ENCODE measurements at regions of chr10 and their contacts with region 1.

Region 1: GRCh38 chr10:92573798-92574547 is at the start of gene IDE:
- DNase-seq: peak; percentile 75 to 90 (median 76)
- H3K4me3 ChIP-seq: peak within 1 kb of the TSS; percentile 69 to 98 (median 93)
- H3K27ac ChIP-seq: peak within 1 kb of the TSS in 58 of 59 donors; percentile 65 to 98 (median 91)
- H3K27me3 ChIP-seq: no peaks in the 10 kb centered on the region
- CTCF ChIP-seq: peak in 46 of 56 donors; percentile 50 to 88 (median 77)
- total RNA-seq, gene IDE: 21.5 to 50.9 (median 31.2) TPM

Region 2: DNA sequence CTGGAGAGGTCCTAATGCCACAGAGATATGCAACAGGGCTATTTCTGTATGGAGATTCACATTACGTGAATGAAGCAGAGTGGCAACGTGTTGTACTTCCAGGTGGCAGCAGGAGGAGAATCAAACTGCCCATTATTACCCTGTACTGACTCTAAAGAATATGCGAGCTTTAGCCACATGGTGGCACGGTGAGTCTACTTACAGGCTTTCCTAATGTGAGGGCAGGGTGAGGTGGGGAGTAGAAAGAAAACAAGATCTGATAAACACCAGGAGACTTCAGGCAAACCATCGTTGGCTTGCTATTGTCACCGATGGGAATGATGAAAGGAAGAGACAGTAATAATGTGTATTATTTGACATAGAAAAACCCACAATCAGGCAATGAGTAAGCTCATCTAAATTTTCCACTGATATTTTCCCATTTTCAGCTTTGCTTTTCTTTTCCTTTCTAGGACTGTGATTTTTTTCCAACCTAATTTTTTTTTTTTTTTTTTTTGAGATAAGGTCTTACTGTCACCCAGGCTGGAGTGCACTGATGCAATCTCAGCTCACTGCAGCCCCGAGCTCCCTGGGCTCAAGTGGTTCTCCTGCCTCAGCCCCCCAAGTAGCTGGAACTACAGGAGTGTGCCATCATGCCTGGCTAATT is 486.1 kb before region 1 on chr10:
- intact Hi-C with region 1: loop called in 1 of 2 experiments (anchors 10 kb)
- DNase-seq: peak in 8 of 10 donors; percentile 47 to 84 (median 56)
- H3K4me3 ChIP-seq: no peak overlapping the region
- H3K27ac ChIP-seq: peak overlapping the region in 21 of 59 donors; percentile 0 to 48 (median 24)
- H3K27me3 ChIP-seq: no peaks in the 10 kb centered on the region
- CTCF ChIP-seq: peak; percentile 9 to 91 (median 76)

Region 3: DNA sequence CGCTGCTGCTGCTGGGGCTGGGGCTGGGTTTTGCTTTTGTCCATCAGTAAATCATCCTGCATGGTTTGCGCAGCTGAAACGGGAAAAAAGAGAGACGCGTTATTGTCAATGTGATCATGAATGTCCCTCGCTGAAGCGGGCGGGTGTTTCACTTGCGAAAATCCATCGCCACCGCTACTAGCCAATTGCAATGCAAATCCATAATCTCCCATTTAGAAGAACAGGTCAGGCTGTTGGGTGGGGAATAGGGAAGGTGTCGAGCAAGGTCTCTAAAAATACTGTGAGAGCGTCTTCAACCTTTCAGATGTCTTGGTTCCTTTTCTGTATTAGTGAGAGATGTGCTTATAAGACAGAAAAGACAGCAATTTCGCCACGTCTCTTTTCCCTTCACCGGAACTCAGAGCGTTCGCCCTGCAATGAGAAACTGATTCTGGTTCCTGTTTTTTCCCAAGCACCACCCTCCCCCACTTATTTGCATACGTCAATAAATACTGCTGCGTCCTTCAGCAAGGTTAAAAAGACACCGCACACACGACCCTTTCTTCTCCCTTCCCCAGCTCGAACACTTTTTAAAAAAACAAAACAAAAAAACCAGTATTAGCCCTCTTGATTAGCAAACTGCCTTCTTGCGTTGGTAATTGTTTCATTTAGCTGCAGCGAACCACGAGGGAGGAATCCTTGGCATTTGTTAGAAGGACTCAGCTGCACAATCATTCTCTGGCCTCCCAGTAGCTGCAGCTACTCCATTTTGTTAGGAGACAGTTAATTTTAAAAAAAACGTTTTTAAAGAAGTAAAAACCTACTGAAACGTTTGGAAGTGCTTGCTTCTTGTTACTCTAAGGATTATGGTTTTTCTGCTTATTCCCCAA is 333.4 kb before region 1 on chr10:
- intact Hi-C with region 1: loop called in 1 of 2 experiments (anchors 5 kb)
- DNase-seq: peak in 9 of 10 donors; percentile 53 to 80 (median 60)
- H3K4me3 ChIP-seq: peak overlapping the region; percentile 60 to 94 (median 81)
- H3K27ac ChIP-seq: peak overlapping the region; percentile 87 to 99 (median 97)
- H3K27me3 ChIP-seq: no peaks in the 10 kb centered on the region
- CTCF ChIP-seq: peak in 5 of 56 donors; percentile 0 to 27 (median 13)

Region 4: GRCh38 chr10:92290837-92291615 is 282.9 kb before region 1 on chr10 and contains the starts of genes CPEB3 and MARCHF5:
- intact Hi-C with region 1: loop called in 1 of 2 experiments (anchors 10 kb)
- DNase-seq: peak; percentile 89 to 97 (median 96)
- H3K4me3 ChIP-seq: peak within 1 kb of the TSS; percentile 72 to 100 (median 97)
- H3K27ac ChIP-seq: peak within 1 kb of the TSS; percentile 47 to 97 (median 92)
- H3K27me3 ChIP-seq: no peaks in the 10 kb centered on the region
- CTCF ChIP-seq: peak; percentile 31 to 75 (median 62)
- total RNA-seq, gene CPEB3: 22.9 to 71.6 (median 53.0) TPM
- total RNA-seq, gene MARCHF5: 20.9 to 46.0 (median 34.0) TPM

Region 5: GRCh38 chr10:92517034-92517655 is 56.8 kb before region 1 on chr10:
- intact Hi-C with region 1: loop called (anchors 2 to 5 kb)
- DNase-seq: peak in 6 of 10 donors; percentile 32 to 75 (median 58)
- H3K4me3 ChIP-seq: peak overlapping the region in 3 of 59 donors; percentile 4 to 38 (median 9)
- H3K27ac ChIP-seq: no peak overlapping the region
- H3K27me3 ChIP-seq: no peaks in the 10 kb centered on the region
- CTCF ChIP-seq: peak; percentile 73 to 93 (median 84)

Region 6: DNA sequence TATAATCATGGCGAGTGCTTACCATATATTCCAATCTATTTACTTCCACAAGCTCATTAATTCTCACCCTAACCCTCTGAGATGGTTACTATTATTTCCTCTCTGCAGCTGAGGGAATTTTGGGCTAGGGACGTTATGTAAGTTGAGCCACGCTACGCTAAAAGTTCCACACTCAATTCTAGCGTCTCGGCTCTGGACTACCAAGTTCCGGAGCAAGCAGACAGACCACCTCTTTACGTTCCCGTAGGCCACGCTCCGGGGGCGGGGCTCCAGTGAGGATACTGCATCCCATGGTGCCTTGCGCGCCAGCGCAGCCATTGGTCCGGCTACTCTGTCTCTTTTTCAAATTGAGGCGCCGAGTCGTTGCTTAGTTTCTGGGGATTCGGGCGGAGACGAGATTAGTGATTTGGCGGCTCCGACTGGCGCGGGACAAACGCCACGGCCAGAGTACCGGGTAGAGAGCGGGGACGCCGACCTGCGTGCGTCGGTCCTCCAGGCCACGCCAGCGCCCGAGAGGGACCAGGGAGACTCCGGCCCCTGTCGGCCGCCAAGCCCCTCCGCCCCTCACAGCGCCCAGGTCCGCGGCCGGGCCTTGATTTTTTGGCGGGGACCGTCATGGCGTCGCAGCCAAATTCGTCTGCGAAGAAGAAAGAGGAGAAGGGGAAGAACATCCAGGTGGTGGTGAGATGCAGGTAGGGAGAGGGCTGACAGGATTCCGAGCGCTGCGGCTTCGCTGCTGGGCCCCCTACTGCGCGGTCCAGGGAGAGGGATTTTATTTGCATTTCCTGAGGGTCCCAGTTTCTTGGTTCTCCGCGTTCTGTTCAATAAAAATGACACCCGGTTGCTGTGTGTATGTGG is 19.0 kb after region 1 on chr10 and contains the start of gene KIF11:
- intact Hi-C with region 1: loop called (anchors 1 kb)
- DNase-seq: peak; percentile 96 to 99 (median 98)
- H3K4me3 ChIP-seq: peak within 1 kb of the TSS; percentile 50 to 100 (median 81)
- H3K27ac ChIP-seq: peak within 1 kb of the TSS; percentile 65 to 98 (median 95)
- H3K27me3 ChIP-seq: no peaks in the 10 kb centered on the region
- CTCF ChIP-seq: peak in 32 of 56 donors; percentile 6 to 59 (median 30)
- total RNA-seq, gene KIF11: 0.77 to 2.4 (median 1.5) TPM

Region 7: DNA sequence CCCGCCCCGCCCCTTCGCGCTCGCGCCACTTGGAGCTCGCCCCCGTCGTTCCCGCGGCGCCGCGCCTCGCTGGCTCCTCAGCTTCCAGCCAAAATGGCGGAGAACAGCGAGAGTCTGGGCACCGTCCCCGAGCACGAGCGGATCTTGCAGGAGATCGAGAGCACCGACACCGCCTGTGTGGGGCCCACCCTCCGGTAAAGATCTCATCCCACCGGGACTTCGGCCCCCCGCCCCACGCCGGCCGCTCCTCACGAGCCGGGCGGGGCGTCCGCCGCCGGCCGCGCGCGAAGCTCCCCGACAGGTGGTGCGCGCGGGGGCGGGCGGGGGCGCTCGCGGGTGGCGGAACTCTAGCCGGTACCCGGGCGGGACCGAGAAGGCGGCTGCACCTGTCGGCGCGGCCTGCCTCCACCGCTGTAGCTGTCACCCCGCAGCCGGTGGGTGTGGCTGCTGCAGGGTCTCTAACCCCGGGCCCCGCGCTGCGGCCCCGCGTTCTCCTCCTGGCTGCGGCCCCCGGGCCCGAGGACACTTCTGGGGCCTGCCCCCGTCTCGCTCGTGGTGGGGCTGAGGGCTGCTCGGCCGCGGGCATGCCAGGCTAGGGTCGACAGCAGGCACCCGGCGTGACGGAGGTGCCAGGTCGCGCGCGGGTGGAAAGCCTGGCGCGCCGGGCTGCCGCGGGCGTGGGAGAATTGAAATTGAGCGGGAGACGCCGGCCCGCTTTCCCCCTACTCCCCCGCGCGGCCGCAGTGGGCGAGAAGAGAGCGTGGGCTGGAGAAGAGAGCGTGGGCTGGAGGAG is 274.7 kb after region 1 on chr10 and contains the start of gene EXOC6:
- intact Hi-C with region 1: loop called in 1 of 2 experiments (anchors 10 kb)
- DNase-seq: peak; percentile 43 to 85 (median 72)
- H3K4me3 ChIP-seq: peak within 1 kb of the TSS; percentile 79 to 100 (median 96)
- H3K27ac ChIP-seq: peak within 1 kb of the TSS in 57 of 59 donors; percentile 13 to 96 (median 86)
- H3K27me3 ChIP-seq: no peaks in the 10 kb centered on the region
- CTCF ChIP-seq: peak in 16 of 56 donors; percentile 5 to 30 (median 11)
- total RNA-seq, gene EXOC6: 14.7 to 38.5 (median 27.0) TPM

Measured in dorsolateral prefrontal cortex (tissue), 120 donors.